ENCODE measurements at regions of chrX and their contacts with region 1.

Region 1: DNA sequence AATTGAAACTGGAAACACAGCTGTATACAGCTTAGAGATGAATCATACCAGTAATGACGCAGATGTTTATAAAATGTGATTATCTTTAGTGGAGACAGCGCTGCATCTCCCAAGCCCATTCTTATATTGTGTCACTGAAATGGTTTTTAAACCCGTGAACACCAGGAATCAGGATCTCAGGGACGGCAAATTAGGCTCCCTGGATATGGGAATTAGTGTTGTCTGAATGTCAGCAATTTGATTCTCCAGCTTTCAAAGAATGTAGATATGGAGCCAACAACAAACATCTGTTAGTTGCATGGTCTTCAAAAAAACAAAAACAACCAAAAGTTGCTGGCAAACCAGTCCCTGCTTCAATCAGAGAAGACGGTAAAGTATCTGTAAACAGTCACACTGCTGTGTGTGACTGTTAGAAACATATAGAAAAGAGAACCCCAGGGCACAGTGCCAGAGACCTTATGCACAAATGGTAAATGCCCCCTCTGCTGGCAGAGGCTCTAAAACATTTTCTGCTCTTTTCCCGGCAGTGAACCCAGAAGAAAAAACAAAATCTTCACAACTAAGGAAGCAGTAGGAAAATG is 351.9 kb upstream of the FTHL17 start:
- DNase-seq: no peak
- ATAC-seq: peak; percentile 16

Region 2: DNA sequence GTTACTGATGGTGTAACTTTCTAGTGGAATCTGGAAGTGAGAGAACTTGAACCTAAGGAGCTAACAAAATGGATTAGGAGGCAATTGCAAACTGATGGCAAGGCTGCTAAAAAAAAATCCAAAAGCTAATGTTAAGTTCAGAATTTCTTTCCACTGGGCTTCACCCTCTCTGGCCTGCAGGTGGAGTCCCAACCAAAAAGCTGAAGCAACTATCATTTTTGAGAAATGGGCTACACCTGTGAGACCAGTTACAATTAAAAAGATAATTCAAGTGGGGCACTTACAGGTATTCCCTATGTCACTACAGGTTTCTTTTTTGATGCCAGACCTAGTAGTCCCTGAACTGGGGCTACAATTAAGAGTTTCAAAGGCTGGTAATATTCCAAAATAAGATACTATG is 209.8 kb before region 1 on chrX:
- intact Hi-C with region 1: loop called (anchors 10 kb)
- DNase-seq: no peak
- ATAC-seq: no peak

Region 3: DNA sequence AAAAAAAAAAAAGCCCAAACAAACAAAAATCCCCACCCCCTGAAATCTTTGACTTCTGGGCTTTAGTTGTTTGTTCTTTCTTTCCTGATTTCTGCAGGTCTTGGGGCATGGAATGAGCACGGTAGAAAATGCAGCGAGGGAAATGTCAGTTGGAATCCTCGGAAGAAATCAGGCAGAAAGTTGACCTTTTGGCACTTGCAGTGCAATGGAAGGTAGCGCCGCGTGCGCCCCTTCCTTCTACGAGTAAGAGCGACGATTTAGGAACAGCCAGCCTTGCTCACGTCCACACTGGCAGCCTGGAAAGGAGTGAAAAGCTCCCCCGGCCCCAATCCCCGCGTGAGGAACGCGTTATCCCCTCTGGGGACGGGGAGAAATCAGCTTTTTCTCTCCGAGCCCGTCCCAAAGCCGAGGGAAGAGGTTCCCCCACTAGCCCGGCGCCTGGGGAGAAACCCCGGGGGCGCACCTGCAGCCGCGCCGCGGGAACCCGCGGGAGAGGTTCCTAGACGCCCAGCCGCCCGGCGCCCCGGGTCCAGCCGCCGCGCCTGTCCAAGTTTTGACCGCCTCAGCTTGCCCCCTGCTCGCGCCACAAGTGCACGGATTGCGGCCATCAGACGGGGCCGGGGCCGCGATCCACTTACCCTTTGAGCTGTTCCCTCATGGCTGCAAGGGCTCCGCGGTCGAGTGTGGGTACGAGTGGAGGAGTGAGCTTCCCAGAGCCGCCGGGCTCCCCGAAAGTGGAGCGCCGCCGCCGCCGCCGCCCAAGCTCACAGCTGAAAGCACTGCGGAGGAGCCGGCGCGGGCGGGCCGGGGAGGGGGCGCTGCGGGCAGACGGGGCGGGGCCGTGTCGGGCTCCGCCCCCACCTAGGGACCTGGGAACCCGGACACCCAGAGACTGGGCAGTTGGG is 157.3 kb before region 1 on chrX:
- intact Hi-C with region 1: loop called (anchors 10 kb)
- DNase-seq: peak; percentile 72
- ATAC-seq: peak; percentile 95

Region 4: GRCh38 chrX:31384471-31384870 is 39.2 kb before region 1 on chrX:
- intact Hi-C with region 1: no loop called
- DNase-seq: no peak
- ATAC-seq: no peak

Region 5: GRCh38 chrX:32170481-32170880 is 746.8 kb after region 1 on chrX:
- intact Hi-C with region 1: no loop called
- DNase-seq: no peak
- ATAC-seq: no peak